Tibial artery (tissue), 4 donors: ENCODE measurements at regions of chr15 and their contacts with region 1.

Region 1: DNA sequence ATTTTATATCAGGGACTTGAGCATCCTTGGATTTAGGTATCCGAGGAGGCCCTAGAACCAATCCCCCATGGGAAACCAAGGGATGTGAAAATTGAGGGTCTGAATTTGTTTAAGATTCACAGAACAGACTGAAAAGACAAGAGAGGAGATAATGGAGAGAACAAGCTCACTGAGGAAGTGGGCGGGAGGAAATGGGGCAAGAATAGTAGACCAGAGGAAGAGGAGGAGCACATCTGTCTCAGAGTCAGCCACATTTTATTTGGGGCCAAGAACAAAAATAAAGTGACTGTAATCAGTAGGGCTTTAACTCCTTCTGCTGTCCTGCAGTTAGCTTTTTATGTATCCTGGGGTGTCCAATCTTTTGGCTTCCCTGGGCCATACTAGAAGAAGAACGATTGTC is 63.8 kb downstream of the BLM start:
- DNase-seq: no peak
- H3K4me3 ChIP-seq: no peak overlapping the region
- H3K27ac ChIP-seq: no peak overlapping the region
- H3K4me1 ChIP-seq: no peaks in the 10 kb centered on the region
- H3K27me3 ChIP-seq: no peaks in the 10 kb centered on the region
- CTCF ChIP-seq: no peak

Region 2: GRCh38 chr15:90660195-90660998 is 120.5 kb before region 1 on chr15:
- intact Hi-C with region 1: no loop called
- DNase-seq: peak; percentile 92 to 93
- H3K4me3 ChIP-seq: peak overlapping the region; percentile 24 to 33
- H3K27ac ChIP-seq: peak overlapping the region; percentile 82 to 86
- H3K4me1 ChIP-seq: peaks cover 0 to 29% (median 14%) of the 10 kb centered on the region in 4 donors
- H3K27me3 ChIP-seq: no peaks in the 10 kb centered on the region
- CTCF ChIP-seq: no peak

Region 3: GRCh38 chr15:90810354-90810753 is 29.4 kb after region 1 on chr15:
- intact Hi-C with region 1: loop called (anchors 2 kb)
- DNase-seq: no peak
- H3K4me3 ChIP-seq: no peak overlapping the region
- H3K27ac ChIP-seq: no peak overlapping the region
- H3K4me1 ChIP-seq: peaks cover 0 to 12% (median 0%) of the 10 kb centered on the region in 4 donors
- H3K27me3 ChIP-seq: no peaks in the 10 kb centered on the region
- CTCF ChIP-seq: no peak

Region 4: GRCh38 chr15:92336419-92336987 is 1555.6 kb after region 1 on chr15:
- intact Hi-C with region 1: loop called (anchors 5 kb)
- DNase-seq: no peak
- H3K4me3 ChIP-seq: no peak overlapping the region
- H3K27ac ChIP-seq: no peak overlapping the region
- H3K4me1 ChIP-seq: no peaks in the 10 kb centered on the region
- H3K27me3 ChIP-seq: peaks cover 0 to 7% of the 10 kb centered on the region in 2 donors
- CTCF ChIP-seq: no peak